PC-9 (cell line): ENCODE measurements at regions of chr3 and their contacts with region 1.

Region 1: DNA sequence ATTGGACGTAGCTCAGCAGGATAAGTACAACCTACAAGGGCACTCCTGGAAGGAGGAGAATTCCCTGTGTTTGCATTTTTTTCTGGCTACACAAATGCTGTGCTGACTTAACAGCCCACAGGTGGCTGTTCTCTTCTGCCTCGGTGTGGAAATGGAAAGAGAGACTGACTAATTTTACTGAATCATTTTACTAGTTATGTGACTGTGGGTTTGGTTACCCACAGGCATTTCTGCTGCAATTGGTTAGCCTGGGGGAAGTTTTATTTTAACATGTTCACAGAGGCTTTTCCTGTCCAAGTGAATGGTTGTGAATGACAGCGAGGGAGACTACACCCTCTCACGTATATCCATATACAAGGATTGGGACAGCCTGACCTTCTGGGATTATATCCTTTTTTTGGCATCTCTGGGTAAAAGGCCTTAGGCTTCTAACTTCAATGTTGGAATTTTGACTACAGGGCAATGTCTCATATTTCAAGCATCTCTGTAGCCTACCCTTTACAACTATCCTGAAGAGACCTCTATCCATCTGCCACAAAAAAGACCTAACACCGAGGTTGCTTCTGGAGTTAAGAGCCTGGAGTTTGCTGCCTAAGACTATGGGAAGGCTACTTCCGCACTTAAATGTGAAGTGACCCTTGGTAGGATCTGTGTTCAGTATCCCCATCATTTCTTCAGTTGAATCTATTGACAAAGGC is 67.2 kb upstream of the TP63 start:
- DNase-seq: peak; percentile 68 to 92
- H3K4me3 ChIP-seq: no peak overlapping the region
- H3K27ac ChIP-seq: peak overlapping the region; percentile 78
- H3K4me1 ChIP-seq: peaks cover 27% of the 10 kb centered on the region
- H3K27me3 ChIP-seq: no peaks in the 10 kb centered on the region
- CTCF ChIP-seq: no peak

Region 2: GRCh38 chr3:189304446-189305351 is 259.3 kb before region 1 on chr3:
- CTCF ChIA-PET with region 1: no interaction called
- POLR2A ChIA-PET with region 1: no interaction called
- intact Hi-C with region 1: loop called (anchors 1 kb)
- DNase-seq: peak; percentile 93 to 99
- H3K4me3 ChIP-seq: peak overlapping the region; percentile 27; the same call in 1 of the 2 replicates
- H3K27ac ChIP-seq: peak overlapping the region; percentile 85
- H3K4me1 ChIP-seq: peaks cover 44% of the 10 kb centered on the region
- H3K27me3 ChIP-seq: no peaks in the 10 kb centered on the region
- CTCF ChIP-seq: no peak

Region 3: GRCh38 chr3:189355481-189356201 is 208.4 kb before region 1 on chr3:
- CTCF ChIA-PET with region 1: no interaction called
- POLR2A ChIA-PET with region 1: no interaction called
- intact Hi-C with region 1: loop called (anchors 2 kb)
- DNase-seq: peak in 1 of 2 experiments; percentile 44
- H3K4me3 ChIP-seq: no peak overlapping the region
- H3K27ac ChIP-seq: peak overlapping the region; percentile 57
- H3K4me1 ChIP-seq: peaks cover 33% of the 10 kb centered on the region
- H3K27me3 ChIP-seq: no peaks in the 10 kb centered on the region
- CTCF ChIP-seq: no peak

Region 4: DNA sequence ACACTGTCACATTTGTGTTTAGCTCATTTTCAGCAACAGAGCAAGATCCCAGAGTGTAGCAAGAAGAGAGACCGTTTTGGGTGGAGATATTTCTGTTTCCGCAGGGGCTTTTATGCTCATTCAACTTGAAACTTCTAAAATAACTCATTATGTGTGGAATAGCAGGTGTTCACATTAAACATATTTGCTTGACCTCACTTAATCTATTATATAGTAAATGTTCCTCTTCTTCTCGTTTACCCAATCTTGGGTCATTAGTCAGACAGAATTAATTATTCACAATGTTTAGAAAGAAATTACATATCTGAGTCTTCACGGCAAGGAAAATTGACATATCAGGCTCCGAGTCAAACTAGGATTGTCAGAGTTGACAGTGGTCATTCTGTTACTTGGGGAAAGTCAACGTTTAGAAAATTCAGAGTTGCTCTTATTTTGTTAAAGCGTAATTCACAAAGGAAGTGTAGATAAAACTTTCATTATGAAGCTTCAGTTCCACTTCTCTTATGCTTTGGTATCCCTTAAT is 169.4 kb before region 1 on chr3:
- CTCF ChIA-PET with region 1: no interaction called
- POLR2A ChIA-PET with region 1: no interaction called
- intact Hi-C with region 1: loop called (anchors 1 kb)
- DNase-seq: no peak
- H3K4me3 ChIP-seq: no peak overlapping the region
- H3K27ac ChIP-seq: peak overlapping the region; percentile 89
- H3K4me1 ChIP-seq: peaks cover 36% of the 10 kb centered on the region
- H3K27me3 ChIP-seq: no peaks in the 10 kb centered on the region
- CTCF ChIP-seq: no peak

Region 5: GRCh38 chr3:189512039-189512438 is 52.0 kb before region 1 on chr3:
- CTCF ChIA-PET with region 1: no interaction called
- POLR2A ChIA-PET with region 1: no interaction called
- intact Hi-C with region 1: loop called (anchors 5 kb)
- DNase-seq: no peak
- H3K4me3 ChIP-seq: no peak overlapping the region
- H3K27ac ChIP-seq: peak overlapping the region; percentile 61; the same call in 1 of the 2 replicates
- H3K4me1 ChIP-seq: peaks cover 27% of the 10 kb centered on the region
- H3K27me3 ChIP-seq: no peaks in the 10 kb centered on the region
- CTCF ChIP-seq: no peak

Region 6: DNA sequence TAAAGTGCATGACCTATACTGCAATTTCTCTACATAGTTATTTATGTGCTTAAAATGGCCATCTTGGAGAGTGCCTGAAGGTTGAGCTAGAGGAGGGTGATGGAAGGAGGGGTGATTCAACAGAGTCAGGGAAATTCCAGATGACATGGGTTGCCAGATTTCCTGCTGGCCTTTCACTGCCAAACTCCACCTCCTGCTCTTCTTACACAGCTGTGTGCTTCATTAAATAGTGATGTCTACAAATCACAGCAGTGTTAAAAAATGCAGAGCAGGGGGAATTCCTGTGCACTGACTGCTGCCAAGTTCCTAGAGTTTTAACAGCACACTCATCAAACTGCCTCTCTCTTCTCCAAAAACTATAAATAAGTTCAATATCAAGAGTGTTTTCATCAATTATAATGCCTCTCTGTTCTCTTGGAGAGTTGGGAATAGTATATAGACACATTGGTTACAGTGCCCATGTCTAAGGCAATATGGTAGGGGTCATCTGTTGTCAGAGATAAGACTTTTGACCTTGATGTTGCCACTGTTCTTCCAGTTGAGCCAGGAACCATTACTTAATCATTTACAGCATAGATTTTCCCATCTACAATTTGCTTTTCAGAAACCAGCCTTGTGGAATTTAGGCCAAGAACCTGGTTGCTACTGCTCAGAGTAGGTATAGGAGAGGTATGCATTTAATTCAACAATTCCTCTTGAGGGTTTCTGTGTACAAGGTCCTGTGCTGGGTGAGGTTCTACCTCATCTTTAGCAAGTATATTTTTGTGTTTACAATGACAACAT is 146.8 kb after region 1 on chr3:
- CTCF ChIA-PET with region 1: no interaction called
- POLR2A ChIA-PET with region 1: no interaction called
- intact Hi-C with region 1: loop called (anchors 2 kb)
- DNase-seq: peak; percentile 65 to 68
- H3K4me3 ChIP-seq: no peak overlapping the region
- H3K27ac ChIP-seq: peak overlapping the region; percentile 16; the same call in 1 of the 2 replicates
- H3K4me1 ChIP-seq: peaks cover 24% of the 10 kb centered on the region
- H3K27me3 ChIP-seq: no peaks in the 10 kb centered on the region
- CTCF ChIP-seq: no peak